ENCODE measurements at regions of chr22 and their contacts with region 1.

Region 1: GRCh38 chr22:36387752-36388518 is at the start of gene MYH9:
- DNase-seq: peak; percentile 99
- ATAC-seq: peak; percentile 86
- H3K4me3 ChIP-seq: peak within 1 kb of the TSS; percentile 88 to 97
- H3K27ac ChIP-seq: peak within 1 kb of the TSS; percentile 97
- H3K4me1 ChIP-seq: peaks cover 33 to 46% of the 10 kb centered on the region in 2 experiments
- H3K27me3 ChIP-seq: no peaks in the 10 kb centered on the region
- CTCF ChIP-seq: no peak
- POLR2A ChIP-seq: peak; percentile 92
- RAD21 ChIP-seq: no peak
- total RNA-seq, gene MYH9: 258 TPM

Region 2: DNA sequence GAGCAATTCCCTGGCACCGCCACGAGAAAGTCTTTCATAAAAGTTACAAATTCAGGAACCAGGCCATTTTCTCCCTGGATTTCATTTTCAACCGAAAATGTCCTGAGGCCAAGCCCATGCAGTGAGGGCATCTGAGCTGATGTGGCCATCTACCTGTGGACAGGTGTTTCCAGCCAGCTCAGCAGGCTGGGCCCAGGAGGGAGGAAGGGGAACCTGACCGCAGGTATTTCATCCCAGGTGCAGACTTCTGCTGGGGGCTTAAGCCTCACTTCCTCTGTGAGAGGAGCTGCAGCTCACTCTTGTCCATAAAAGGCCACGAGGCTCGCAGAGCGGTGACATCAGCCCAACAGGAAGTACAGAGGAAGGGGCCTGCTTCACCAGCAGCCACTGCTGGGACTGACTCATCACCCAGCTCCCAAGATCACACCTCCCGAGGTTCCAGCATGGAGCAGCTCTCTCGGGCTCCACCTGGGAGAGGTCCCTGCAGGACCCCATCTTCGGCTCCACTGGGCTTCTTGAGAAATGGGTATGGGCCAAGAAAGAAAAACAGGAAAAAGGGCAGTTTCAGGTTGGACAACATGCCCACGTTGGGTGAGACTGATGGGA is 56.5 kb before region 1 on chr22:
- CTCF ChIA-PET with region 1: no interaction called
- POLR2A ChIA-PET with region 1: interaction called, 3 read pairs
- RAD21 ChIA-PET with region 1: no interaction called
- intact Hi-C with region 1: loop called (anchors 5 kb)
- DNase-seq: peak; percentile 82
- ATAC-seq: peak; percentile 79
- H3K4me3 ChIP-seq: peak overlapping the region; percentile 4 to 10; a peak in 1 of 4 replicates
- H3K27ac ChIP-seq: peak overlapping the region; percentile 87
- H3K4me1 ChIP-seq: peaks cover 64 to 86% of the 10 kb centered on the region in 2 experiments
- H3K27me3 ChIP-seq: no peaks in the 10 kb centered on the region
- CTCF ChIP-seq: no peak
- POLR2A ChIP-seq: no peak
- RAD21 ChIP-seq: no peak

Region 3: GRCh38 chr22:36369922-36370791 is 17.8 kb before region 1 on chr22:
- CTCF ChIA-PET with region 1: interaction called, 5 read pairs
- POLR2A ChIA-PET with region 1: interaction called, 37 read pairs
- RAD21 ChIA-PET with region 1: interaction called in 1 of 2 experiments, 3 read pairs
- intact Hi-C with region 1: no loop called
- DNase-seq: no peak
- ATAC-seq: peak; percentile 35
- H3K4me3 ChIP-seq: no peak overlapping the region
- H3K27ac ChIP-seq: peak overlapping the region; percentile 79
- H3K4me1 ChIP-seq: peaks cover 97 to 100% of the 10 kb centered on the region in 2 experiments
- H3K27me3 ChIP-seq: no peaks in the 10 kb centered on the region
- CTCF ChIP-seq: no peak
- POLR2A ChIP-seq: no peak
- RAD21 ChIP-seq: no peak

Region 4: GRCh38 chr22:36398621-36399469 is 10.9 kb after region 1 on chr22:
- CTCF ChIA-PET with region 1: no interaction called
- POLR2A ChIA-PET with region 1: interaction called, 17 read pairs
- RAD21 ChIA-PET with region 1: no interaction called
- intact Hi-C with region 1: no loop called
- DNase-seq: no peak
- ATAC-seq: 0 out of 2 replicates have a peak, but pooled peaks have one; percentile 6
- H3K4me3 ChIP-seq: peak overlapping the region in 1 of 2 experiments; percentile 13; a peak in 1 of 4 replicates
- H3K27ac ChIP-seq: no peak overlapping the region
- H3K4me1 ChIP-seq: peaks cover 23 to 48% of the 10 kb centered on the region in 2 experiments
- H3K27me3 ChIP-seq: no peaks in the 10 kb centered on the region
- CTCF ChIP-seq: no peak
- POLR2A ChIP-seq: no peak
- RAD21 ChIP-seq: no peak

Region 5: DNA sequence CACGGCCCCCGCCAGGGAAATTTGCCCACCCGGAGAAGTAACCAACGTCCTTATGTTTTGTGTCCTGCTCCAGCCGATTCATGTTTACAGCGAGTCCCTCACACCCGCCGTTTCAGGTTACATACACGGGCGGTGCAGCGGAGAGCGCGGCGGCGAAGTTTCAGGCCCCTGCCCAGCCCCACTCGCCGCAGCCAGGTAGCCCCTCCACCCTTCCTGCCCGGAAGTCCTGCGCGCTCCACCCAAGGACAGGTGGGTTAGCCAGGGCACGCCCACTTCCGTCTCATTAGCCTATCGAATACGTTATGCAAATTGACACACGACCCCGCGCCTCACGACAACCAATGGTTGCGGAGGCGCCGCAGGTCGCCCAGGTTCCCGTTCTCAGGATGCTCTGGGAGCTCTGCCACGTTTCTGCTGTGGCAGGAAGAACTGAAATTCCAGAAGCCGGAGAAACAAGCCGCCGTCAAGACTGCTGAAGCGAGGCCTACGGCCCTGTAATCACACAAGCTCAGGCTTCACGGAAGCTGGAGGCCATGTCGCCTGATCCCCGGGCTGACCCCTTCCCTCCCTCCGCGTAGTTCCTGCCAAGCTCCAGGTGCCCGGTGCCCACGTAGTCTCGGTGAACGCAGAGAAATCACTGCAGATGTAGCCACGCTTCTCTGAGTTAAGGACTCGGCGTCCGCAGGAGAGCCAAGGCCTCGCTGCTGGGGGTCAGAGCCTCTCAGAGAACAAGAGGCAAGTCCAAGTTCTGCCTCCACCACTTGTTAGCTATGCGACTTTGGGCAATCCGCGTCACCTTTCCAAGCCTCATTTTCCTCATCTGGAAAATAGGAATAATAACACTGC is 22.2 kb after region 1 on chr22:
- CTCF ChIA-PET with region 1: no interaction called
- POLR2A ChIA-PET with region 1: interaction called, 23 read pairs
- RAD21 ChIA-PET with region 1: no interaction called
- intact Hi-C with region 1: no loop called
- DNase-seq: peak; percentile 96
- ATAC-seq: peak; percentile 96
- H3K4me3 ChIP-seq: peak overlapping the region; percentile 79 to 80
- H3K27ac ChIP-seq: peak overlapping the region; percentile 86
- H3K4me1 ChIP-seq: peaks cover 29 to 43% of the 10 kb centered on the region in 2 experiments
- H3K27me3 ChIP-seq: no peaks in the 10 kb centered on the region
- CTCF ChIP-seq: peak in 2 of 3 experiments; percentile 29 to 32; a peak in 3 of 6 replicates
- POLR2A ChIP-seq: peak; percentile 72
- RAD21 ChIP-seq: no peak

Region 6: GRCh38 chr22:36454916-36455570 is 67.1 kb after region 1 on chr22:
- CTCF ChIA-PET with region 1: no interaction called
- POLR2A ChIA-PET with region 1: interaction called, 3 read pairs
- RAD21 ChIA-PET with region 1: no interaction called
- intact Hi-C with region 1: loop called (anchors 5 kb)
- DNase-seq: peak; percentile 80
- ATAC-seq: peak; percentile 83
- H3K4me3 ChIP-seq: peak overlapping the region; percentile 35 to 57
- H3K27ac ChIP-seq: peak overlapping the region; percentile 49; the same call in 1 of the 2 replicates
- H3K4me1 ChIP-seq: peaks cover 35 to 55% of the 10 kb centered on the region in 2 experiments
- H3K27me3 ChIP-seq: no peaks in the 10 kb centered on the region
- CTCF ChIP-seq: no peak
- POLR2A ChIP-seq: no peak
- RAD21 ChIP-seq: no peak

Region 7: DNA sequence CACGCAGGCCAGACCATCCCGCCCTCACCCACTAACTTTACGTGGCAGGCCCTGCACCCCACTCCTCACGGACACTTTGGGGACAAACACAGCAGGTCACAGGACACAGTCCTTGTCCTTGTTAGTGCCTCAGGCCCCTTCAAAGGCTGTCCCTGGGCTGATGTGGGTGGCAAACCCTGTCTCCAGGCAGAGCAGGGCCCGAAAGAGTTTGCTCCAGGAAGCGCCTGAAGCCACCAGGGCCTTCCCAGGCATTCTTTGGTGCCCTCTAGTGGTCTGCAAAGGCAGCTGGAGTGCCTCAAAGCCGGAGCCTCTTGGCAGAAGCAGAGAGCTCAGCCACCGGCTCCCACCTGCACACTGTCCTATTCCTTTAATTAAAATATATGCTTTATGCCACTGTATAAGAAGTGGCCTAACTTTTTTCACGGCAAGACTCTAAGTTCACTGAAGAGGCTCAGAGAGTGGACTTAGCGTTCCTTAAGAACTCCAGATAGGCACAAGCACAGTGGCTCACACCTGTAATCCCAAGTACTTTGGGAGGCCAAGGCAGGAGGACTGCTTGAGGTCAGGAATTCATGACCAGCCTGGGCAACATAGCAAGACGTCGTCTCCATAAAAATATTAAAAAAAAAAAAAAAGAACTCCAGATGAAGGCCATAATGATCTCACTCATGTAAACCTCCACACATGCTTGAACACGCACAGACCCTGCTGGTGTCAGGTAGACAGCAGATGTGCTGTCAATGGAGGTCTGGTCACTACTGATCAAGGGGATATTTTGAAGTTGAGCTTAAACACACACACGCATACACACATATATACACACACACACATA is 82.4 kb after region 1 on chr22:
- CTCF ChIA-PET with region 1: interaction called, 5 read pairs
- POLR2A ChIA-PET with region 1: interaction called, 5 read pairs
- RAD21 ChIA-PET with region 1: interaction called, 3 to 9 read pairs
- intact Hi-C with region 1: loop called (anchors 5 kb)
- DNase-seq: peak; percentile 60
- ATAC-seq: peak; percentile 55
- H3K4me3 ChIP-seq: no peak overlapping the region
- H3K27ac ChIP-seq: peak overlapping the region; percentile 31; the same call in 1 of the 2 replicates
- H3K4me1 ChIP-seq: peaks cover 45 to 51% of the 10 kb centered on the region in 2 experiments
- H3K27me3 ChIP-seq: no peaks in the 10 kb centered on the region
- CTCF ChIP-seq: peak; percentile 85 to 96 (median 94)
- POLR2A ChIP-seq: no peak
- RAD21 ChIP-seq: peak; percentile 98

Measured in HCT116 (cell line).